CD4-positive, alpha-beta T cell (primary cell): ENCODE measurements at regions of chr2 and their contacts with region 1.

Region 1: GRCh38 chr2:201231781-201232466 is 28.4 kb upstream of the CASP8 start:
- DNase-seq: peak; percentile 78 to 97 (median 88)
- ATAC-seq: peak; percentile 51
- H3K4me3 ChIP-seq: peak overlapping the region; percentile 4
- H3K4me3 Mint-ChIP-seq: peak overlapping the region; percentile 97
- H3K27ac ChIP-seq: no peak overlapping the region
- H3K27ac Mint-ChIP-seq: peak overlapping the region; percentile 95
- H3K4me1 ChIP-seq: peaks cover 36% of the 10 kb centered on the region
- H3K4me1 Mint-ChIP-seq: peaks cover 70% of the 10 kb centered on the region
- H3K27me3 ChIP-seq: no peaks in the 10 kb centered on the region
- H3K27me3 Mint-ChIP-seq: no peaks in the 10 kb centered on the region
- CTCF ChIP-seq: peak; percentile 85

Region 2: DNA sequence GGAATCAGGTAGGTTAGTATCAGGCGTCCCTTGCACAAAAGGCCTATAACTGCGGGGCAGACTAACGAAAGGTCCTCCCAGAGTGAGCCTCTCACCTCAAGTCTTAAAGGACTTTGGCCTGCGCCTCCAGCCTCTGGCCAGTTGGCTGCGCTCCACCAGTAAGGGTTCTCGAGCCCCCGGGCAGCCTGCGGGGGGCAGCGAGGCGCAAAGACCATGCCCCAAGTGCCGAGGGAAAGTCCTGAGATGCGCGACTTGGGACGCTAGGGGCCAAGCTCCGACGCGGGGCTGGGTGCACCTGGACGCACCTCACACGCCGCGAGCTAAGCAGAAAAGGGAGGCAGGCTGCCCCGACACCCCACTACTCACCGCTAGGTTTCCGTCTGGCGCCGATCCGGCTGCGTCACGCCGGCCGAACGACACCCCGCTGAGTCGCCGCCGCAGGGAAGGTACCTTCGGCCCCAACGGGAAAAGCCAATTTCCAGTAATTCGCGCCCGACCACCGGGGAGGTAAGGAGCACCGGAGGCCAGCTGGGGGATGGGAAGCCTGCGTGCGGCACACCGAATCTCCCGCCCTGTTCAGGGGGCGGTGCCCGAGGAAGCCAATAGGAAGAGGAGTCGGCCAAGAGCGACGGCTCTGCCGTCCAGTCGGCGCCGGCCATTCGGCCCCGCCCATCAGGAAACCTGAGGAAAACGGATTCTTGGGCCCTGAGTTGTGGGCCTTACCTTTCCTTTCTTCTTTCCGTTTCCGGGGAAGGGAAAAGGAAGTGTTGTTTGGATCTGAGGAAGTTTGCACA is 268.6 kb before region 1 on chr2 and contains the start of gene ORC2:
- CTCF ChIA-PET with region 1: interaction called, 25 read pairs
- POLR2A ChIA-PET with region 1: interaction called, 4 read pairs
- intact Hi-C with region 1: loop called in 1 of 2 experiments (anchors 1 kb)
- DNase-seq: peak; percentile 87 to 96 (median 90)
- ATAC-seq: peak; percentile 95
- H3K4me3 ChIP-seq: peak within 1 kb of the TSS; percentile 98
- H3K4me3 Mint-ChIP-seq: peak within 1 kb of the TSS; percentile 99
- H3K27ac ChIP-seq: peak within 1 kb of the TSS; percentile 89 to 92
- H3K27ac Mint-ChIP-seq: peak within 1 kb of the TSS; percentile 100
- H3K4me1 ChIP-seq: peaks cover 25% of the 10 kb centered on the region
- H3K4me1 Mint-ChIP-seq: peaks cover 73% of the 10 kb centered on the region
- H3K27me3 ChIP-seq: no peaks in the 10 kb centered on the region
- H3K27me3 Mint-ChIP-seq: no peaks in the 10 kb centered on the region
- CTCF ChIP-seq: peak; percentile 74
- total RNA-seq, gene ORC2: 25.0 to 26.6 TPM

Region 3: DNA sequence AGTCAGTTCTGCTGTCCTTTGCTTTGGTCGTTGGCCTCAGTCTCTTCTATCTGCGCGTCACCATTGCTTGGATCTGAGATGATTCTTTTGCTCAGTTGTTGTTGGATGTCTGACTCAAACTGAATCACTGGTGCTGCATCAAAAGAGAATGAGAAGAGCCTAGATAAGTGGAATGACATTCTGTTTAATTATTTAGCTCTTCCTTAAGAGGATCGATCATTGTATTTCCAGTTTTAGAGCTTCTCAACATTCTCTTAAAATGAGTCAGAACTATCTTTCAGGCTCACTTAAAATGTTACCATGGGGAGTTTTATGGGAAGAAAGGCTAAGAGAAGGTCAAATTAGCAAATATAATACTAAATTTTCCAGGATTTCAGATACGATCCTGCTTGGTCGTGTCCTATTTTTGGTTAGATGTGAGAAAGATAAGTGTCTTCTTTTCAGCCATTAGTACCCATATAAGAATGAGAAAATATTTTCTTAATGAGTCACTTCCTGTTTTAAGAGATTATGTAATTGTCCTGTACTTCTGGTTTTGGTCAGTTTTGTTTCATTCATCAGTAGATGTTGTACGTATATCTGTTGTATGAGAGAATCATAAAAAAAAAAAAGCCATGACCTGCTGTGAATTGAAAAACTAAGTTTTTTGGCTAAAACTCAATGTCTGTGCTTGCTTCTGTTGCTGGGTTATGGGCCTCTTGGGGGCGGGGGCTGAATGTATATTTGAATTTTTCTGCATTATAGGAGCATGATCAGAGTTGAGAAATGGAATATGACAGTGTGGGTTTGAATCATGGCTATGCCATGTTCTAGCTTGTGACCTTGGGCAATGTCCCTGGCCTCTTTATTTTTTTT is 80.6 kb before region 1 on chr2:
- CTCF ChIA-PET with region 1: interaction called, 10 read pairs
- POLR2A ChIA-PET with region 1: no interaction called
- intact Hi-C with region 1: no loop called
- DNase-seq: peak in 3 of 14 experiments; percentile 33 to 44 (median 41)
- ATAC-seq: no peak
- H3K4me3 ChIP-seq: no peak overlapping the region
- H3K4me3 Mint-ChIP-seq: no peak overlapping the region
- H3K27ac ChIP-seq: peak overlapping the region; percentile 13 to 68
- H3K27ac Mint-ChIP-seq: peak overlapping the region; percentile 87
- H3K4me1 ChIP-seq: peaks cover 19% of the 10 kb centered on the region
- H3K4me1 Mint-ChIP-seq: peaks cover 38% of the 10 kb centered on the region
- H3K27me3 ChIP-seq: no peaks in the 10 kb centered on the region
- H3K27me3 Mint-ChIP-seq: no peaks in the 10 kb centered on the region
- CTCF ChIP-seq: no peak

Region 4: DNA sequence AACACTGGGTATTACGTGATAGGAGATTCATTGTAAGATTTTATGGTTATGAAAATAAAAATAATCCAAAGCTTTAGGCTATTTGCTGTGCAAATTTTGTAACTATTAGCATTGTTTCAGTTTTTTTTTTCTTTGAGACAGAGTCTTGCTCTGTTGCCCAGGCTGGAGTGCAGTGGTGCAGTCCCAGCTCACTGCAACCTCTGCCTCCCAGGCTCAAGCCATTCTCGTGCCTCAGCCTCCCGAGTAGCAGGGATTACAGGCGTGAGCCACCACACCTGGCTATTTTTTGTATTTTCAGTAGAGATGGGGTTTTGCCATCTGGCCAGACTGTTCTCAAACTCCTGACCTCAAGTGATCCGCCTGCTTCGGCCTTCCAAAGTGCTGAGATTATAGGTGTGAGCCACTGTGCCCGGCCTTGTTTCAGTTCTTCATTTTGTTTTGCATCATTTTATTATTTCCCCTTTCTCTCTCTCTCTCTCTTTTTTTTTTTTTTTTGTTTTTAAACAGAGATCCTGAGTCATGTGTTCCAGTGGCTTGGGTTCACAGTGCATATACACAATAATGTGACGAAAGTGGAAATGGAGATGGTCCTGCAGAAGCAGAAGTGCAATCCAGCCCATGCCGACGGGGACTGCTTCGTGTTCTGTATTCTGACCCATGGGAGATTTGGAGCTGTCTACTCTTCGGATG is 23.2 kb before region 1 on chr2:
- CTCF ChIA-PET with region 1: interaction called, 28 read pairs
- POLR2A ChIA-PET with region 1: interaction called, 21 read pairs
- intact Hi-C with region 1: loop called in 1 of 2 experiments (anchors 2 kb)
- DNase-seq: peak in 2 of 14 experiments; percentile 53 to 62
- ATAC-seq: no peak
- H3K4me3 ChIP-seq: no peak overlapping the region
- H3K4me3 Mint-ChIP-seq: no peak overlapping the region
- H3K27ac ChIP-seq: no peak overlapping the region
- H3K27ac Mint-ChIP-seq: peak overlapping the region; percentile 31
- H3K4me1 ChIP-seq: peaks cover 37% of the 10 kb centered on the region
- H3K4me1 Mint-ChIP-seq: peaks cover 52% of the 10 kb centered on the region
- H3K27me3 ChIP-seq: no peaks in the 10 kb centered on the region
- H3K27me3 Mint-ChIP-seq: no peaks in the 10 kb centered on the region
- CTCF ChIP-seq: no peak

Region 5: GRCh38 chr2:201285499-201285898 is 53.6 kb after region 1 on chr2:
- CTCF ChIA-PET with region 1: interaction called, 10 read pairs
- POLR2A ChIA-PET with region 1: interaction called, 4 read pairs
- intact Hi-C with region 1: no loop called
- DNase-seq: no peak
- ATAC-seq: no peak
- H3K4me3 ChIP-seq: no peak overlapping the region
- H3K4me3 Mint-ChIP-seq: no peak overlapping the region
- H3K27ac ChIP-seq: no peak overlapping the region
- H3K27ac Mint-ChIP-seq: peak overlapping the region; percentile 3
- H3K4me1 ChIP-seq: peaks cover 2% of the 10 kb centered on the region
- H3K4me1 Mint-ChIP-seq: peaks cover 15% of the 10 kb centered on the region
- H3K27me3 ChIP-seq: no peaks in the 10 kb centered on the region
- H3K27me3 Mint-ChIP-seq: no peaks in the 10 kb centered on the region
- CTCF ChIP-seq: no peak

Region 6: DNA sequence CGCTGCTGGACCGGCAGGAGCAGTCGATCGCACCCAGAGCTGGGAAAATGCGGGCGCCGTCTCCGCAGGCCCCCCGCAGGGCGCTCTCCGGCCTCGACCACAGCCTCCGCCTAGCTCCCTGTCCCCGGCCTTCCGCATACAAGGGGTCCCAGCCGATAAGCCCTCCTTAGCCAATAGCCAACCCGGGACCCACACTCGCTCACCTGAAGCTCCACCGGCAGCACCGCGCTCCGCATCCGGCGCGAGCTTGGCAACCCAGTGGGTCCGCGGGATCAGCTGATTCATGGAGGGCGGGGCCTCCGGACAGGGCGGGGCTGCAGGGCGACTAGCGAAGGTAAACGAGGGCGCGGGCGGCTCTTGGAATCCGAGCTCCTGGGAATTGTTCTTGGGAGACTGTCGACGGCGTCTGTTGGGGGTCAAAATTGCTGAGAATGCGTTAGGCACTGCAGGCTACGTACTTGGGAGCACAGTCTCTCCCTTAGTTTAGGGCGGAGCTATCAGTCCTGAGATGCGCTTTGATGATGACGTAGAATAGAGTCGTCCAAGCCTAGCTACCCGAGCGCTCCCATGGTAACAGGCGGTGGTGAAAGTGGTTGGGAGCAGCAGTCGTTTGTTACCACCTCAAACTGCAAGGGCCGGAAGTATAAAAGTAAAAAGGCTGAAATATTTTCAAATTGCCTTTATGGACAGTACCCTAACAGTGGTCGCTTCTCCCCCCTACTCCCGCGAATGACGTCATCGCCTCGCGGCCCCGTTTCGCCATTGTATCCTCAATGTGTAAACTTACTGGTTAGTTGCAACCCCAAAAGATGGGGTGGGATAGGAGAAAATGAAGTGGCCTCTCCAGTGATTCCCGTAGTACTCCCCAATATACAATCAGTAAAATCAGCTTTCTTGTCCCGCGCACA is 549.0 kb after region 1 on chr2 and contains the start of gene ALS2:
- CTCF ChIA-PET with region 1: no interaction called
- POLR2A ChIA-PET with region 1: interaction called, 6 read pairs
- intact Hi-C with region 1: loop called in 1 of 2 experiments (anchors 5 kb)
- DNase-seq: peak; percentile 86 to 96 (median 92)
- ATAC-seq: peak; percentile 90
- H3K4me3 ChIP-seq: peak within 1 kb of the TSS; percentile 66
- H3K4me3 Mint-ChIP-seq: peak within 1 kb of the TSS; percentile 98
- H3K27ac ChIP-seq: peak within 1 kb of the TSS; percentile 77 to 88
- H3K27ac Mint-ChIP-seq: peak within 1 kb of the TSS; percentile 93
- H3K4me1 ChIP-seq: peaks cover 15% of the 10 kb centered on the region
- H3K4me1 Mint-ChIP-seq: peaks cover 20% of the 10 kb centered on the region
- H3K27me3 ChIP-seq: no peaks in the 10 kb centered on the region
- H3K27me3 Mint-ChIP-seq: no peaks in the 10 kb centered on the region
- CTCF ChIP-seq: no peak
- total RNA-seq, gene ALS2: 7.0 to 7.2 TPM